ENCODE measurements at regions of chr20 and their contacts with region 1.

Region 1: DNA sequence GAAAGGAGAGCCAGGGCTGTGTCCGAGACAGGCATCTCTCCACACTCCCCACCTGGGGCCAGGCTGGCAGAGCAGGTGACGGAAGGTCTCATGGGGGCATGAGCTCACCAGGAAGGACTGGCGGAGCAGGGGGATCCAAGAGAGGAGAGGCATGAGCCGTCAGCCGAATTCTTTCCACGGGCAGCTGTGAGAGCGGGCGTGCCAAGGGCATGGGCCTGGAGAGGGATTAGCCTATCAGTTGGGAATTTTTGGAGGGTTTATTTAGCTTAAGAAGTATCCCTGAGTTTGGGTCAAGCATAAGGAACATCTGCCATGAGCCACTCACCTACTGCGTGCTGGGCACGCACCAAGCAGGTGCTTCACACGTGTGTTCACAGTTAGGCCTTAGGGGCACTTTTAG is 60.2 kb upstream of the ZNFX1 start:
- DNase-seq: no peak
- ATAC-seq: no peak

Region 2: GRCh38 chr20:49484180-49485140 is 146.4 kb after region 1 on chr20:
- intact Hi-C with region 1: loop called (anchors 1 kb)
- DNase-seq: peak; percentile 90
- ATAC-seq: peak; percentile 96

Region 3: GRCh38 chr20:49534255-49534712 is 196.2 kb after region 1 on chr20:
- intact Hi-C with region 1: loop called (anchors 2 kb)
- DNase-seq: no peak
- ATAC-seq: peak; percentile 76

Measured in Right ventricle myocardium superior (tissue), 1 donor.